ENCODE measurements at regions of chr10 and their contacts with region 1.

Region 1: GRCh38 chr10:133159950-133160819 is at the start of gene KNDC1:
- DNase-seq: peak; percentile 56
- ATAC-seq: no peak
- total RNA-seq, gene KNDC1: 7.1 TPM

Region 2: DNA sequence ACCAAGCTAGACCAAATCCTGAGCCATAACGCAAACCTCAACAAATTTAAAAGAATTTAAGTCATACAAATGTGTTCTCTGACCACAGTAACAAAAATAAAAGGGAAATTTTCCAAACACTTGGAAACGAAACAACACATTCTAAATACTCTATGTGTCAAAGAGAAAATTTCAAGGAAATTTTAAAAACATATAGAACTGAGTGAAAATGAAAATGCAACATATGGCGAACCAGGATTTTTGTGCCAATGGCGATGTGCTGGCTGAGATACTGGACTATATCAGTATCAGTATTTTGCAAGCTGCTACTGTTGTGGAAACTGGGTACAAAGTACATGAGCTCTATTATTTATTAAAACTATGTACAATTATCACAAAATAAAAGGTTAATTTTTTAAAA is 34.0 kb after region 1 on chr10:
- intact Hi-C with region 1: loop called (anchors 1 kb)
- DNase-seq: no peak
- ATAC-seq: no peak

Region 3: DNA sequence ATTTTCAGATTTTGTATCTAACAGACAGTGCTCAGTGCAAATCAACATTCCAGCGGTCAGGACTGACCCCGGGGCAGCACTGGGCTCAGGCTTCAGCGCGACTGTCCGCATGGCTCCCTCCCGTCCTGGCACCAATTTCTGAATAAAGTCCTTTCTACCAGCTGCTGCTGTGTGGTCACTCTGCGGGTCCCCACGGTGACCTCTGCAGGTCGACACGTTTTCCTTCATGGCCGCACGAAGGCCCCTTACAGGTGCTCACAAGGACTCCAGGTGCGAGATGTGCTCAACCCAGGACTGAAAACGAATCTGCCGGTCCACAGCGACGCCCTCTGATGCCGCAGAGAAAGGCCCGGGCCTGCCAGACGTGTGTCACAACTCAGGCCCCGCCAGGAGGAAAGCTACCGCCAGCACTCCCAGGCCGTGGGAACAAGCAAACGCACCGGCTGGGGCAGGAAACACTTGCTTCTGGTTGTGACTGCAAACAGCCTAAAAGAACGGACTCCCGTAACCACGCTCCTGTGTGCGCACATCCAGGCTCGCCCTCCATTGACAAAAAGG is 66.1 kb after region 1 on chr10:
- intact Hi-C with region 1: no loop called
- DNase-seq: no peak
- ATAC-seq: no peak

Region 4: DNA sequence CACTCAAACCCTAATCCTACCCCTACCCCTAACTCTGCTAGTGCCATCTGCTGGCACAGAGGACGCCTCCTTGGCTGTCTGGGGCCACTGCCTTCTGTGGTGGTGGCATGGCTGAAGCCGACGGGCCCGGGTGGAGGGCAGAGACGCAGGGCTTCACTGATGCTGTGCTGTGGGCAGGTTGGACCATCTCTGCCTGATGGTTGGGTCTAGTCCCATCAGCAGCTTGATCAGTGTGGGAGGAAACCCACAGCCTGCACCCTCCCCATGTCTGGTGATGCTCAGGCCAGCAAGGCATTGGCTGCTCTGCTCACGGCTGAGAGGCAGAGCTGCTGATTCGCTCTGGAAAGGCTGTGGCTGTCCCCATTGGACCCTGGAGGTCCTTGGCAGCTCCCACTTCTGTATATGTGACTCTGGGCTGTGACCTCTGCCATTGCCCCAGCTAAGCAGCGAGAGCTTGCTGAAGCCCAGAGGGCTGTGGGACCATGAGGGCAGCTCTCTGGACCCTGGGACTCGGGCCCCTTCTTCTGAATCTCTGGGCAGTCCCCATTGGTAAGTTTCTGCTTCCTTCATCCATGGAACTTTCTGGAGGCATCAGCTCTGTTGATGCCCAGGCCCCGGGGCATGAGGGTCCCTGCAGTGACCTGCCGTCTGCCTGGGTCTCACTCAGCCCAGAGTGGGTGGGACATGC is 293.5 kb after region 1 on chr10 and contains the start of gene SCART1:
- intact Hi-C with region 1: no loop called
- DNase-seq: no peak
- ATAC-seq: no peak
- total RNA-seq, gene SCART1: 4.7 TPM

Measured in sciatic nerve (tissue), 2 donors.